ENCODE measurements at regions of chr22 and their contacts with region 1.

Region 1: GRCh38 chr22:31313366-31314147 is 21.3 kb upstream of the PIK3IP1 start:
- DNase-seq: peak; percentile 17 to 76 (median 56)
- ATAC-seq: peak; percentile 70 to 82 (median 75)
- H3K4me3 ChIP-seq: no peak overlapping the region
- H3K4me3 Mint-ChIP-seq: peak overlapping the region in 1 of 3 donors; percentile 3
- H3K27ac ChIP-seq: no peak overlapping the region
- H3K27ac Mint-ChIP-seq: peak overlapping the region; percentile 46 to 68
- H3K4me1 ChIP-seq: peaks cover under 1 to 8% of the 10 kb centered on the region in 2 experiments
- H3K4me1 Mint-ChIP-seq: peaks cover 19 to 23% (median 22%) of the 10 kb centered on the region in 3 donors
- H3K27me3 ChIP-seq: no peaks in the 10 kb centered on the region
- H3K27me3 Mint-ChIP-seq: no peaks in the 10 kb centered on the region

Region 2: DNA sequence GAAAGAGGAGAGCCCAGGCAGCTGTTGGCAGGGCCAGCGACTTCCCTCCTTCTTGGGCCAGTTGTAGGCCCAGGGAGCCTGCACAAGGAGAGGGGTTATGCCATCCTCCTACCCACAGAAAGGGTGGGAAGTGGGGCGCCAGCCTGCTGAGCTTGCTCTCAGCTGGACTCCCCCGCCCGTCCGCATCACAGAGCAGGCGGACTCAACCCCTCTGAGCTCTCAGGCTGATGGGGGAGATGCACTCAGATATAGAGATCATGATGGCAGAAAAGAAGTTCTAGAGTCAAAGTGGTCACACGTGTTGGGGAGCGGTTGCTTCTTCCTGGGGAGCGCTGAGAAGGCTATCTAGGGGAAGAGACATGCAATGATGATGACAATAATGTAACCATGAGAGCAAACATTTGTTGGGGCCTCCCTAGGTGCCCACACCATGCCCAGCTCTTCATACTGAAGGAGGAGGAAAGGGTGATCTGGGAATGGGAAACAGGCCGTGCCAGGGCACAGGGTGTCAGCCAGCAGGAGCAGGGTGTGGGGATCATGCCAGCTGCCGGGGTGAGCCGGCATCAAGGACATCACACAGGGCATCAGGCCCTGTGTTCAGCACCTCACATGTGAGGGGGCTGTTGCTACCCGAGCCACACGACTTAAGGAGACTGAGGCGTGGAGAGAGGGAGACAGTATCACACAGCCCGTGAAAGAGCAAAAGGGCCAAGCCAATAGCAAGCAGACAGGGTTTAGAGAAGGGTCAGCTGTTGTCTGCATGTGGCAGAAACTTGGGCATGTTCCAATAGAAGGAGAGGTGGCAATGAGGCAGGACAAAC is 670.3 kb before region 1 on chr22:
- CTCF ChIA-PET with region 1: interaction called in 1 of 2 experiments, 10 read pairs
- POLR2A ChIA-PET with region 1: no interaction called
- DNase-seq: no peak
- ATAC-seq: no peak
- H3K4me3 ChIP-seq: no peak overlapping the region
- H3K4me3 Mint-ChIP-seq: no peak overlapping the region
- H3K27ac ChIP-seq: no peak overlapping the region
- H3K27ac Mint-ChIP-seq: peak overlapping the region in 1 of 2 donors; percentile 39
- H3K4me1 ChIP-seq: no peaks in the 10 kb centered on the region
- H3K4me1 Mint-ChIP-seq: peaks cover 6 to 10% (median 9%) of the 10 kb centered on the region in 3 donors
- H3K27me3 ChIP-seq: no peaks in the 10 kb centered on the region
- H3K27me3 Mint-ChIP-seq: no peaks in the 10 kb centered on the region

Region 3: DNA sequence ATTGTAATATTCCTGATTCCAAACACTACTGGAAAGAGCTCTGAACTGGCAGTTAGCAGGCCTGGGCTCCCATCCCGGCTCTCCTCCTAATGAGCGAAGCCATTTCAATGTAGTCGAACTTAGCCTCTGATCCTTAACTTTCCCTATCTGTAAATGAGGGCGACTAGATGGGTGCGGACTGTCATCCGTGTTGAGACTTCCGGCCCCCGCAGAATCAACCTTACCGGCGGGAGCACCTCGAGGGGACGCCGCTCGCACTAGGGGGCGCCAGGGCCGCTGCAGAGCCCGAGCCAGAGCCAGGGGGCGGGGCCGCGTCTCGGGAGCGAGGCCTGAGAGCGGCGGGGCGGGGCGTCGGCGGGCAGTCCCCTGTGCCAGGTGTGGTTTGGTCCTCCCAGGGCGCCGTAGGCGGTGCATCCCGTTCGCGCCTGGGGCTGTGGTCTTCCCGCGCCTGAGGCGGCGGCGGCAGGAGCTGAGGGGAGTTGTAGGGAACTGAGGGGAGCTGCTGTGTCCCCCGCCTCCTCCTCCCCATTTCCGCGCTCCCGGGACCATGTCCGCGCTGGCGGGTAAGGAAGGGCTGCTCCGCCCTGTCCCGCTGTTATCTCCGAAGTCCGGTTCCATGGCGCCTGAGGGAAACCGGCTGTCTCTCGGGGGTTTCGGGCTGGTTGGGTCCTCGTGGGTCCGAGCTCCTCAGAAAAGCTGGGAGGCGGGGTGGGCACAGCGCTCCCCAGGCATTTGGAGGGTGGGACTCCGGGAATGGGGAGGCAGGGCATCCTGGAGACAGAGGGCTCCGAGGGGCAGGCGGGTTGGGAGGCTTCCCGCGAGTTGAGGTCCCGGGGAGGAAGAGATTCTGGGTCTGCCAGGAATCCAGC is 101.5 kb before region 1 on chr22 and contains the start of gene LIMK2:
- CTCF ChIA-PET with region 1: interaction called in 1 of 2 experiments, 13 read pairs
- POLR2A ChIA-PET with region 1: no interaction called
- DNase-seq: peak; percentile 91 to 99 (median 96)
- ATAC-seq: peak; percentile 98 to 99 (median 98)
- H3K4me3 ChIP-seq: peak within 1 kb of the TSS; percentile 94 to 95
- H3K4me3 Mint-ChIP-seq: peak within 1 kb of the TSS; percentile 84 to 89 (median 86)
- H3K27ac ChIP-seq: peak within 1 kb of the TSS; percentile 82
- H3K27ac Mint-ChIP-seq: peak within 1 kb of the TSS; percentile 92 to 98
- H3K4me1 ChIP-seq: peaks cover 16 to 36% of the 10 kb centered on the region in 2 experiments
- H3K4me1 Mint-ChIP-seq: peaks cover 55 to 57% (median 56%) of the 10 kb centered on the region in 3 donors
- H3K27me3 ChIP-seq: no peaks in the 10 kb centered on the region
- H3K27me3 Mint-ChIP-seq: no peaks in the 10 kb centered on the region
- total RNA-seq, gene LIMK2: 21.5 to 31.5 (median 29.7) TPM

Region 4: GRCh38 chr22:31290494-31291471 is 22.8 kb before region 1 on chr22:
- CTCF ChIA-PET with region 1: interaction called, 4 to 21 read pairs
- POLR2A ChIA-PET with region 1: interaction called, 5 to 11 read pairs
- DNase-seq: peak; percentile 90 to 98 (median 96)
- ATAC-seq: peak; percentile 74 to 79 (median 76)
- H3K4me3 ChIP-seq: peak overlapping the region; percentile 58 to 69
- H3K4me3 Mint-ChIP-seq: peak overlapping the region; percentile 93 to 98 (median 97)
- H3K27ac ChIP-seq: peak overlapping the region; percentile 98
- H3K27ac Mint-ChIP-seq: peak overlapping the region; percentile 99 to 100
- H3K4me1 ChIP-seq: peaks cover 46 to 66% of the 10 kb centered on the region in 2 experiments
- H3K4me1 Mint-ChIP-seq: peaks cover 63 to 79% (median 71%) of the 10 kb centered on the region in 3 donors
- H3K27me3 ChIP-seq: no peaks in the 10 kb centered on the region
- H3K27me3 Mint-ChIP-seq: no peaks in the 10 kb centered on the region

Region 5: GRCh38 chr22:31556627-31557203 is 243.2 kb after region 1 on chr22:
- CTCF ChIA-PET with region 1: no interaction called
- POLR2A ChIA-PET with region 1: no interaction called
- DNase-seq: peak in 4 of 35 experiments; percentile 2 to 44 (median 6)
- ATAC-seq: peak in 1 of 4 experiments; percentile 55
- H3K4me3 ChIP-seq: no peak overlapping the region
- H3K4me3 Mint-ChIP-seq: no peak overlapping the region
- H3K27ac ChIP-seq: no peak overlapping the region
- H3K27ac Mint-ChIP-seq: no peak overlapping the region
- H3K4me1 ChIP-seq: peaks cover 0 to 8% of the 10 kb centered on the region in 2 experiments
- H3K4me1 Mint-ChIP-seq: peaks cover 0 to 13% (median 11%) of the 10 kb centered on the region in 3 donors
- H3K27me3 ChIP-seq: no peaks in the 10 kb centered on the region
- H3K27me3 Mint-ChIP-seq: no peaks in the 10 kb centered on the region